Gastrocnemius medialis (tissue), 4 donors: ENCODE measurements at regions of chr2 and their contacts with region 1.

Region 1: DNA sequence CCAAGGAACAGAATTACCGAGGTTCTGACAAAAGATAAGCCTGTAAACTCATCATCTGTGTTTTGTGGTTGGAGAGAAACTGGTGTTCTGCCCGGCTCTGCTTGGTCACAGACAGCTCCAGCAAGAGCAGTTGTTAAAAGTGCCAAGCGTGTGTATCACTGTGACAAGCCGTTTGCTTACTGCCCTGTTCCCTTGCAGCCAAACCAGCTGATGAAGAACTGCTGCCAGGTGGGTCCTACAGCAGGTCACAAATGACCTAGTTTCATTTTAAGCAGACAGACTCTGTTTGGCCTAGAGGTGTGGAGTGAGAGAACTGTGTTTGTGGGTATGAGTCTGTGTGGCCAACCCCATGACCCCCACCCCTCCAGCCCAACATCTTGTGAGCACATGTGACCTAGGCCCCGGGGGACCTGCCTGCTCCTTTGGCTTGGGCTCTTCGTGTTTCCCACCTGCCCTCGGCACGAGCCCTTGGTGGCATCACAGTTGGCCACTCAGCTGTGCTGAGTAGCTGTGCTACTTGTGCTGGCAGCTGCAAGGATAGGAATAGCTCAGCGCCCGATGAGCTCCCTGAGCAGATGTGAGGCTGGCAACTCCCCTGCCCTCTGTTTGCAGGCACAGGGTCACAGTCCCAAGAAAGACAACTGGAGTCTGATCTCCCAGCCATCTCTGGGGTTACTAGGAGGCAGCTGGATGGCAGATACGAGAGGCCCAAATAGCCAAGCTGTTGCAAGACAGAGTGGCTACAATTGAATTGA is 9.7 kb downstream of the OXER1 start:
- DNase-seq: peak; percentile 90 to 97
- ATAC-seq: peak; percentile 82 to 85
- H3K4me3 ChIP-seq: peak overlapping the region; percentile 15 to 36 (median 26)
- H3K27ac ChIP-seq: peak overlapping the region; percentile 88 to 93 (median 91)
- H3K4me1 ChIP-seq: peaks cover 30 to 32% of the 10 kb centered on the region in 2 donors
- H3K27me3 ChIP-seq: no peaks in the 10 kb centered on the region
- CTCF ChIP-seq: no peak
- POLR2A ChIP-seq: peak; percentile 38 to 43

Region 2: GRCh38 chr2:42706836-42707235 is 47.4 kb before region 1 on chr2:
- in situ Hi-C with region 1: no loop called
- intact Hi-C with region 1: no loop called
- DNase-seq: no peak
- ATAC-seq: no peak
- H3K4me3 ChIP-seq: no peak overlapping the region
- H3K27ac ChIP-seq: no peak overlapping the region
- H3K4me1 ChIP-seq: no peaks in the 10 kb centered on the region
- H3K27me3 ChIP-seq: no peaks in the 10 kb centered on the region
- CTCF ChIP-seq: no peak
- POLR2A ChIP-seq: no peak

Region 3: GRCh38 chr2:42736598-42737322 is 17.4 kb before region 1 on chr2:
- in situ Hi-C with region 1: no loop called
- intact Hi-C with region 1: no loop called
- DNase-seq: no peak
- ATAC-seq: no peak
- H3K4me3 ChIP-seq: no peak overlapping the region
- H3K27ac ChIP-seq: no peak overlapping the region
- H3K4me1 ChIP-seq: no peaks in the 10 kb centered on the region
- H3K27me3 ChIP-seq: no peaks in the 10 kb centered on the region
- CTCF ChIP-seq: no peak
- POLR2A ChIP-seq: no peak

Region 4: DNA sequence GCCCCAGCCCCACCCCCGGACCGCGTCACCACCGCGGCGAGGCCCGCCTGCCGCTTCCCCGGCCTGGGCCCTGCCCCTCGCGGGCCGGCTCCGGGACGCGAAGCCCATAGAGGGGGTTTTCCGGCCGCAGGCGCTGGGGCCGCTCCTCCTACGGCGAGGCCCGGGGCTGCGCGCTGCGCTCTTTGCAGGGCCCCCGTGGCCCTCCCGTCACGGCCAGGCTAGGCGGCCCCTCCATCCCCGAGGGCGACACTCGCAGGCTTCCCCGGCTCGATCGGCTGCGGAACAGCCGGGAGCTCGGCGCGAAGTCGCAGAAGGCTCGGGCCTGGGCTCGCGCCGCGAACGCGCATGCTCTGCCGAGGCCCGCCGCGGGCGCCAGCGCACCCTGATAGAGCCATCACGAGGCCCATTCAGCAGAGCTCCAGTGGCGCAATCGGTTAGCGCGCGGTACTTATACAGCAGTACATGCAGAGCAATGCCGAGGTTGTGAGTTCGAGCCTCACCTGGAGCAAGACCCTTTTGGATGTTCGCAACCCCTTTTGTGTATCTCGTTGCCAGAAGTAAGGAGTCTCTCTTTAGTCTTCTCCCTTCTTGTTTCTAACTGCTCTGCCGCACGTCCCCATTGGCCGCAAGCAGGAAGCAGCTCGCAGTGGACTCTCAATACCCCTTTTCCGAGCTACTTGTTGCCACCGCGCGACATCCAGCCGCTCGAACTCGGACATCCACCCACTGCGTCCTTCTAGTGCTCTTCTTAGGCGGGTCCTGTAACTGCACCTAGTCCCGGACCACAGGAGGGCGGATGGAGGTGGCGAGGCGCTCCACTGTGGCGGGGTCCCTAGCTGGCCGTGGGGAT is 56.1 kb after region 1 on chr2:
- in situ Hi-C with region 1: no loop called
- intact Hi-C with region 1: loop called (anchors 1 kb)
- DNase-seq: peak; percentile 89 to 96
- ATAC-seq: peak; percentile 80 to 90
- H3K4me3 ChIP-seq: peak overlapping the region; percentile 68 to 97 (median 84)
- H3K27ac ChIP-seq: peak overlapping the region; percentile 96 to 100 (median 98)
- H3K4me1 ChIP-seq: peaks cover 8 to 11% of the 10 kb centered on the region in 2 donors
- H3K27me3 ChIP-seq: no peaks in the 10 kb centered on the region
- CTCF ChIP-seq: peak in 2 of 5 experiments; percentile 10 to 14
- POLR2A ChIP-seq: peak; percentile 82 to 88